HCT116 (cell line): ENCODE measurements at regions of chr6 and their contacts with region 1.

Region 1: GRCh38 chr6:10411971-10412745 is 2.7 kb downstream of the TFAP2A start:
- DNase-seq: no peak
- ATAC-seq: peak; percentile 39
- H3K4me3 ChIP-seq: peak overlapping the region; percentile 64 to 87
- H3K27ac ChIP-seq: peak overlapping the region; percentile 92
- H3K4me1 ChIP-seq: peaks cover 5 to 18% of the 10 kb centered on the region in 2 experiments; a peak in 3 of 4 replicates
- H3K27me3 ChIP-seq: no peaks in the 10 kb centered on the region
- CTCF ChIP-seq: no peak
- POLR2A ChIP-seq: no peak
- RAD21 ChIP-seq: no peak

Region 2: GRCh38 chr6:8983188-8983688 is 1428.9 kb before region 1 on chr6:
- CTCF ChIA-PET with region 1: interaction called, 5 read pairs
- POLR2A ChIA-PET with region 1: no interaction called
- RAD21 ChIA-PET with region 1: no interaction called
- intact Hi-C with region 1: loop called (anchors 5 kb)
- DNase-seq: peak; percentile 61
- ATAC-seq: peak; percentile 98
- H3K4me3 ChIP-seq: no peak overlapping the region
- H3K27ac ChIP-seq: no peak overlapping the region
- H3K4me1 ChIP-seq: peaks cover 0 to 5% of the 10 kb centered on the region in 2 experiments; a peak in 1 of 4 replicates
- H3K27me3 ChIP-seq: no peaks in the 10 kb centered on the region
- CTCF ChIP-seq: peak; percentile 91 to 98 (median 91)
- POLR2A ChIP-seq: no peak
- RAD21 ChIP-seq: peak; percentile 91

Region 3: GRCh38 chr6:9540534-9541126 is 871.5 kb before region 1 on chr6:
- CTCF ChIA-PET with region 1: no interaction called
- POLR2A ChIA-PET with region 1: interaction called, 3 read pairs
- RAD21 ChIA-PET with region 1: no interaction called
- intact Hi-C with region 1: loop called (anchors 2 kb)
- DNase-seq: peak; percentile 47
- ATAC-seq: peak; percentile 67; the same call in 1 of the 2 replicates
- H3K4me3 ChIP-seq: no peak overlapping the region
- H3K27ac ChIP-seq: no peak overlapping the region
- H3K4me1 ChIP-seq: 0 out of 4 replicates have a peak, but pooled peaks cover 0 to 6% of the 10 kb centered on the region in 2 experiments
- H3K27me3 ChIP-seq: no peaks in the 10 kb centered on the region
- CTCF ChIP-seq: peak; percentile 47 to 81 (median 65); a peak in 4 of 6 replicates
- POLR2A ChIP-seq: no peak
- RAD21 ChIP-seq: peak; percentile 64

Region 4: DNA sequence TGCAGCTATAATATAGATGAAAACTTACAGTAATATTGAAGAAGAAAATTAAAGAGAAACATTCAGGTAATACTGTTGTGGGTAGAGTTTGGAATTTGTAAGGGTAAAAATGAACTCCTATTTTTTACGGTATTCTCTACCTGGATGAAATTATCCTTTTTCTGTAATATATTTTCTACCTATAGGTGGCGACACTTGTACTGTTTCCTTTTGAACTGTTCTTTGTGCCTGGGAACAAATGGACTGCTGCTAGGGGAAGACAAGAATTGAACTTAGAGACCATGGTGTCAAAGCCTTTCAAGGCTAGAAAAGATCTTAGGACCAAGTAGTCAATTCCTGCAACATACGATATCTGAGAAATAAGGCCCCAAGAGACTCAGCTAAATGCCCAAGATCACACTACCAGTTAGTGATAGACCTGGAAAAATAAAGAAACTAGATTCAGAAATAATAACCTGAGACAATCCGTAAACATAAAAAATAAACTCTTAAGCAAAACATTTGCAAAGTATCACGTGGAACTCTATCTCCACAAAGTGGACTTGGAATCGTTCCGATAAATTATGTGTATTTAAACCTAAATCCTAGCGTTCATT is 381.1 kb before region 1 on chr6:
- CTCF ChIA-PET with region 1: interaction called, 9 read pairs
- POLR2A ChIA-PET with region 1: no interaction called
- RAD21 ChIA-PET with region 1: interaction called in 1 of 2 experiments, 3 read pairs
- intact Hi-C with region 1: loop called (anchors 2 kb)
- DNase-seq: peak; percentile 31
- ATAC-seq: peak; percentile 72
- H3K4me3 ChIP-seq: no peak overlapping the region
- H3K27ac ChIP-seq: no peak overlapping the region
- H3K4me1 ChIP-seq: no peaks in the 10 kb centered on the region
- H3K27me3 ChIP-seq: no peaks in the 10 kb centered on the region
- CTCF ChIP-seq: peak; percentile 42 to 68 (median 50); a peak in 5 of 6 replicates
- POLR2A ChIP-seq: no peak
- RAD21 ChIP-seq: peak; percentile 72

Region 5: DNA sequence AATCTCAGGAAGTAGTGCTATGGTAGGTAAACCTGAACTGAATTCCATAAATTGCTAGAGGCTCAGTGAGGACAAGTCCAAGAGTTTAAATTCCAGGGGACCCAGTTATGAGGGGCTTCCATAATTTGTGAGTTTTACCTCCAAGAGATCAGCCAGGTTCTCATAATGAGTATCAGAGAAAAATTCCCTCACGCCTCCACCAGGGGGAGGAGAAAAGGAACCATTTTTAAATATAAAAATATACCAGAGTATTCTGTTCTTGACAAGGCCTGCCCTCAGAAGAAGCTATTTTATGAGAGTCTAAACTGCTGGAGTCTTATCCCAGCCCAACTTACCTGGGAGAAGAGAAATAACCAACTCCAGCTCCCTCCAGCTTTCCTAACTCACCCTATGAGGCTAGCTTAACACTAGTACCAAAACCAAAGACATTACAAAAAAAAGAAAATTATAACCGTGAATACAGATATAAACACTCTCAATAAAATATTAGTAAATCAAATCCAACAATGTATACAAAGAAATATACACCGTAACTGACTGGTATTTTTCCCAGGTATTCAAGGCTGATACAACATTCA is 156.0 kb before region 1 on chr6:
- CTCF ChIA-PET with region 1: interaction called, 11 read pairs
- POLR2A ChIA-PET with region 1: no interaction called
- RAD21 ChIA-PET with region 1: no interaction called
- intact Hi-C with region 1: loop called (anchors 1 kb)
- DNase-seq: peak; percentile 7
- ATAC-seq: peak; percentile 82
- H3K4me3 ChIP-seq: no peak overlapping the region
- H3K27ac ChIP-seq: no peak overlapping the region
- H3K4me1 ChIP-seq: no peaks in the 10 kb centered on the region
- H3K27me3 ChIP-seq: no peaks in the 10 kb centered on the region
- CTCF ChIP-seq: peak; percentile 43 to 59 (median 56); a peak in 5 of 6 replicates
- POLR2A ChIP-seq: no peak
- RAD21 ChIP-seq: peak; percentile 47

Region 6: DNA sequence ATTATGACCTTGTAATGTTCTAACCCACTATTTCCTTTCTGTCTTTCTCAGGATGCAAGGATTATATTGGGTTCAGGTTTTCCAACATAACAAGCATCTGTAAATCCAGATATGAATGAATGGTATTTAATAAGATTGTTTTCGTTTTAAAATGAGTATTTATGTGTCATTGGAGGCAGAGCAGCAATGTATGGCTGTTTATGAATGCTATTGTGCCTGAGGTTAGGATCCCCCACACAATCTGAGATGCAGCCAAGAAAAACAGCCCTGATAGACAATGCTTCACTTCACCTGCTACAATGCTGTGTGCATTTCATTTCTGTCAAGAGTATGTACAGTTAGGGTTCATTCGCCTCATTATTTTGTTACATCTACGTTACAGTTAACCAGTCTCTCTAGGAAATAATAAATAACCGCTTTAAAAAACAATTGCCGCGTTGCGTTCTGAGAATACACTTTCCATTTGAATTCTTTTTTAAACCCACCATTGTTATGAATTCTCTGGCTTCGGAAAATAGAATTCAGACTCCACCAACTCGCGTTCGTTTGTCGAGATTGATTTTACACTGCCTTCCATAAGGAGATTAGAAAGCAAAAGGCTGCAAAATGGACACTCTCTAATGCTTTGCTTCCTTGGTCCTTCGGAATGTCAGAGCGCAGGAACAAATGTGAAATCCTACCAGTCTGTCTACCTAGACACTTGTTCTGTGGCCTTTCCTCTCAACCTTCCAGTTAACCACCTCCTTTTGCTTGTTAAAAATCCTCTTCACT is 16.8 kb before region 1 on chr6:
- CTCF ChIA-PET with region 1: no interaction called
- POLR2A ChIA-PET with region 1: no interaction called
- RAD21 ChIA-PET with region 1: no interaction called
- intact Hi-C with region 1: no loop called
- DNase-seq: no peak
- ATAC-seq: no peak
- H3K4me3 ChIP-seq: no peak overlapping the region
- H3K27ac ChIP-seq: no peak overlapping the region
- H3K4me1 ChIP-seq: peaks cover 1 to 2% of the 10 kb centered on the region in 2 experiments; a peak in 1 of 4 replicates
- H3K27me3 ChIP-seq: no peaks in the 10 kb centered on the region
- CTCF ChIP-seq: no peak
- POLR2A ChIP-seq: no peak
- RAD21 ChIP-seq: no peak

Region 7: DNA sequence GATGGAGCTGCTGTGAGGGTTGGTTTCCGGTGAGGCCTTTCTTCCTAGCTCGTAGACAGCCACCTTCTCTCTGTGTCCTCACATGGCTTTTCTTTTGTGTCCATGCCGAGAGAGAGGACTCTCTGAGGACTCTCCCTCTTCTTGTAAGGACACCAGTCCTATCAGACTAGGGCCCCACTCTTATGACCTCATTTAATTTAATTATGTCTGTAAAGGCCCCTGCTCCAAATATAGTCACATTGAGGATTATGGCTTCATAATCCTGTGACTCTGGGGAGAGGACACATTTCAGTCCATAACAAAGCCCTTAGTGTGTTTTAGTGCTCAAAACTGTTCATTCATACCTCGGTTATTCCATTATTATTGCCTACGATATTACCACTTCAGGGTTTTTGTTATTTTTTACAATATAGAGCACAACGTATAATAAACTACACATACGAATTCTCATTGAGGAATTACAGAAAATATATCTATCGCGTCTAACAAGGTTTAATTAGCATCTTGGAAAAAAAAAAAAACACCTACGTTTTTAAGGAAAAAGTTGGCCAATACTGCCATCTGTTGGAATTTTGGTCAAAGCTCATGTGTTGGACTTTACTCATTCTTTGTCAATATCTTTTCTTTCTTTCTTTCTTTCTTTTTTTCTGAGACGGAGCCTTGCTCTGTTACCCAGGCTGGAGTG is 22.7 kb after region 1 on chr6:
- CTCF ChIA-PET with region 1: interaction called, 23 read pairs
- POLR2A ChIA-PET with region 1: interaction called, 28 read pairs
- RAD21 ChIA-PET with region 1: interaction called, 6 to 9 read pairs
- intact Hi-C with region 1: no loop called
- DNase-seq: no peak
- ATAC-seq: peak; percentile 51
- H3K4me3 ChIP-seq: peak overlapping the region; percentile 33 to 35
- H3K27ac ChIP-seq: no peak overlapping the region
- H3K4me1 ChIP-seq: peaks cover 14 to 52% of the 10 kb centered on the region in 2 experiments; a peak in 3 of 4 replicates
- H3K27me3 ChIP-seq: no peaks in the 10 kb centered on the region
- CTCF ChIP-seq: peak; percentile 46 to 69 (median 52); a peak in 5 of 6 replicates
- POLR2A ChIP-seq: no peak
- RAD21 ChIP-seq: peak; percentile 79